Posterior cingulate gyrus (tissue), 11 donors: ENCODE measurements at regions of chr16 and their contacts with region 1.

Region 1: DNA sequence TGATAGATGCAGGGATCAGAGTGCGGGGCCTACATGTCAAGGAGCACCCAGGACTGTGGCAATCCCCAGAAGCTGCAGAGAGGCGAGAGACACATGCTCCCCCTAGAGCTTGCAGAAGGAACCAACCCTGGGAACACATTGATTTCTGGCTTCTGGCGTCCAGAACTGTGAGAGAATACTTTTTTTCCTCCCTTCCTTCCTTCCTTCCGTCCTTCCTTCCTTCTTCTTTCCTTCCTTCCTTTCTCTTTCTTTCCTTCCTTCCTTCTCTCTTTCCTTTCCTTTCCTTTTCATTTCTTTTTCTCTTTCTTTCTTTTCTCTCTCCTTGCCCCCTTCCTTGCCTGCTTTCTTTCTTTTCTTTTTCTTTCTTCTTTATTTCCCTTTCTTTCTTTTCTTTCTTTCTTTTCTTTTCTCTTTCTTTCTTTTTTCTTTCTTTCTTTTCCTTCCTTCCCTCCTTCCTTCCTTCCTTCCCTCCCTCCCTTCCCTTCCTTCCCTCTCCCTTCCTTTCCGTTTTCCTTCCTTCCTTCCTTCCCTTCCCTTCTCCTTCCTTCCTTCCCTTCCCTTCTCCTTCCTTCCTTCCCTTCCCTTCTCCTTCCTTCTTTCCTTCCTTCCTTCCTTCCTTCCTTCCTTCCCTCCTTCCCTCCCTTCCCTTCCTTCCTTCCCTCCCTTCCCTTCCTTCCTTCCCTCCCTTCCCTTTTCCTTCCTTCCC is 134.3 kb downstream of the HAPSTR1 start:
- DNase-seq: peak in 6 of 10 donors; percentile 17 to 91 (median 34)

Region 2: DNA sequence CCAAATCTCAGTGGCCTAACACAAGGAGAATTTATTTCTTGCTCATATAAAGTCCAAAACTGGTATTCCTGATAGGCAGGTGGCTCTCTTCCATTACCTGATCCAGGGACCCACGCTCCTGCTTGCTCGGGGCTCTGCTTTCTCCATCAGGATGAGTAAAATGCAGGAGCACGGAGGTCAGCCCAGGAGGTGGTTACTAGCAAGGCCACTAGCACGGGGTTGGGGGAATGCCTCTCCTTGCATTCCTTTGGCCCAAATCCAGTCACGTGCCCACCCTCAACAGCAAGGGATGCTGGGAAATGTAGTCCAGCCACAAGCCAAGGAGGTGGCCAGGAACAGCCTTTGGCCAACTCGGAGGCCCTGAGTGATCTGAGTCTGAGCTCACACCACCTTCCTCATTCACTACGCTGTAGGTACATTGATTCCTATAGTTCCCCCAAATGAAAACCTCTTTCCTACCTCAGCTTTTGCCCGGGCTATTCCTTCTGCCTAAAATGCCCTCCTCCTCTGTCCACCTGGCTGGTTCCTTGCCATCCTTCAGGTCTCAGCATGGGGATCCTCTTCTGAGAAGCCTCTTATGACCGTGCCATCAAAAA is 172.7 kb before region 1 on chr16:
- intact Hi-C with region 1: no loop called
- DNase-seq: peak in 9 of 10 donors; percentile 18 to 91 (median 48)

Region 3: GRCh38 chr16:9159839-9160550 is 65.8 kb before region 1 on chr16:
- intact Hi-C with region 1: loop called (anchors 1 kb)
- DNase-seq: peak; percentile 66 to 98 (median 82)

Region 4: GRCh38 chr16:9297437-9298113 is 71.8 kb after region 1 on chr16:
- intact Hi-C with region 1: no loop called
- DNase-seq: peak in 8 of 10 donors; percentile 18 to 91 (median 55)